ENCODE measurements at regions of chr14 and their contacts with region 1.

Region 1: GRCh38 chr14:91570021-91570420 is 59.9 kb upstream of the PPP4R3A start:
- DNase-seq: no peak
- H3K4me3 ChIP-seq: no peak overlapping the region
- H3K27ac ChIP-seq: no peak overlapping the region
- H3K4me1 ChIP-seq: peaks cover 7% of the 10 kb centered on the region
- H3K27me3 ChIP-seq: peaks cover 3% of the 10 kb centered on the region
- CTCF ChIP-seq: no peak

Region 2: DNA sequence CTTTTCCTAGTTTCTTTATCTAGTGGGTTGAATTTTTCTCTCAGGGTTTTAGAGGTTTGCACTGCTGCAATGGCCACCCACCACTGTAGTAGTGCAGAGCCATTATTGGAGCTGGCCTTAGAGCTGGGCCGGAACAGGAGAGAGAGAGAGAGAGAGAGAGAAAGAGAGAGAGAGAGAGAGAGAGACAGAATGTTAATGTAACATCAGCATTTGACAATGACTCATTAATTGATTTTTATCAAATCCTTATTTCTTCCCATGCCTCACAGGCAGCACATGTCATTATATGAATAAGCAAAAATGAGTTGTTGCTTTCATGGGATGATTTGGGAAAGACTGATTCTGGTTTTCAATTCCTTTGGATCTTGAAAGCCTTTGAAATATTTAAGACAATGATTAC is 16.4 kb after region 1 on chr14:
- CTCF ChIA-PET with region 1: no interaction called
- dilution Hi-C with region 1: no loop called
- in situ Hi-C with region 1: no loop called
- intact Hi-C with region 1: loop called (anchors 2 kb)
- DNase-seq: peak; percentile 11
- H3K4me3 ChIP-seq: no peak overlapping the region
- H3K27ac ChIP-seq: no peak overlapping the region
- H3K4me1 ChIP-seq: no peaks in the 10 kb centered on the region
- H3K27me3 ChIP-seq: no peaks in the 10 kb centered on the region
- CTCF ChIP-seq: no peak